SK-N-SH (cell line): ENCODE measurements at regions of chr17 and their contacts with region 1.

Region 1: GRCh38 chr17:48131216-48131824 is 23.8 kb downstream of the SNX11 start:
- DNase-seq: peak; percentile 82
- H3K4me3 ChIP-seq: no peak overlapping the region; a peak in 1 of 4 replicates
- H3K27ac ChIP-seq: no peak overlapping the region
- H3K4me1 ChIP-seq: peaks cover 7 to 17% of the 10 kb centered on the region in 2 experiments; a peak in 2 of 4 replicates
- H3K27me3 ChIP-seq: peaks cover 8% of the 10 kb centered on the region; the same call in 1 of the 2 replicates
- CTCF ChIP-seq: peak; percentile 99
- EP300 ChIP-seq: no peak
- RAD21 ChIP-seq: peak; percentile 99

Region 2: GRCh38 chr17:48002266-48002915 is 128.9 kb before region 1 on chr17:
- CTCF ChIA-PET with region 1: no interaction called
- POLR2A ChIA-PET with region 1: no interaction called
- DNase-seq: no peak
- H3K4me3 ChIP-seq: peak overlapping the region in 1 of 2 experiments; percentile 43; a peak in 2 of 4 replicates
- H3K27ac ChIP-seq: peak overlapping the region; percentile 99 to 100
- H3K4me1 ChIP-seq: peaks cover 61 to 65% of the 10 kb centered on the region in 2 experiments
- H3K27me3 ChIP-seq: no peaks in the 10 kb centered on the region
- CTCF ChIP-seq: no peak
- EP300 ChIP-seq: no peak
- RAD21 ChIP-seq: no peak

Region 3: GRCh38 chr17:48037036-48037837 is 94.1 kb before region 1 on chr17 and contains the start of gene COPZ2:
- CTCF ChIA-PET with region 1: interaction called, 232 read pairs
- POLR2A ChIA-PET with region 1: no interaction called
- DNase-seq: peak; percentile 85
- H3K4me3 ChIP-seq: peak within 1 kb of the TSS; percentile 53 to 63
- H3K27ac ChIP-seq: peak within 1 kb of the TSS in 1 of 2 experiments; percentile 1; a peak in 1 of 4 replicates
- H3K4me1 ChIP-seq: peaks cover 5 to 14% of the 10 kb centered on the region in 2 experiments; a peak in 2 of 4 replicates
- H3K27me3 ChIP-seq: no peaks in the 10 kb centered on the region
- CTCF ChIP-seq: peak; percentile 69
- EP300 ChIP-seq: no peak
- RAD21 ChIP-seq: peak; percentile 13; the same call in 1 of the 2 replicates
- polyA plus RNA-seq, gene COPZ2: 31.2 and 36.9 TPM in 2 replicates

Region 4: GRCh38 chr17:48074315-48075081 is 56.8 kb before region 1 on chr17:
- CTCF ChIA-PET with region 1: interaction called, 127 read pairs
- POLR2A ChIA-PET with region 1: no interaction called
- DNase-seq: peak; percentile 77
- H3K4me3 ChIP-seq: no peak overlapping the region
- H3K27ac ChIP-seq: peak overlapping the region in 1 of 2 experiments; percentile 33; a peak in 1 of 4 replicates
- H3K4me1 ChIP-seq: no peaks in the 10 kb centered on the region
- H3K27me3 ChIP-seq: no peaks in the 10 kb centered on the region
- CTCF ChIP-seq: peak; percentile 98
- EP300 ChIP-seq: no peak
- RAD21 ChIP-seq: peak; percentile 96

Region 5: DNA sequence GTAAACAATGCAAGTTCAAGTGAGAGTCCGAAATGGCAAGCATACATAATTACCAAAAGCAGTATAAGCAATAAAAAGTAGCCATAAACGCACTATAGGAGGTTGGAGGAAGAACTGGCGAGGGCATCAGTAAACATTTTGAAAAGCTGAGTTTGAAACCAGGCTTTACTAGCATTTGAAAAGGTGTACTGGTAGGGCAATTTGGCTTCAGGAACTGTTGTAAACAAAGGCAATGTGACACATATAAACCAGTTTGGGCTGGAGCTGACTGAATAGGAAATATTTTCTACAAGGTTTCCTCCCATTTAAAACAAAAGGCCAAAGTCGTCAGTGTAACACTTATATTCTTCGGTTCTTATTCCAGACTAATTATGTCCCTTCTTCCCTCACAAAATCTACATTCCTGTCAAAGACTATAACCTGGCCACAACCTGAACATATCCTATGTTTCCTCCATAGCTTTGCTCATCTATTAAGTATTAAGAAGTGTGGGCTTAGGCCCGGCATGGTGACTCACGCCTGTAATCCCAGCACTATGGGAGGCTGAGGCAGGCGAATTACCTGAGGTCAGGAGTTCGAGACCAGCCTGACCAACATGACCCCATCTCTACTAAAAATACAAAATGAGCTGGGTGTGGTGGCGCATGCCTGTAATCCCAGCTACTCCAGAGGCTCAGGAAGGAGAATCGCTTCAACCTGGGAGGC is 37.8 kb before region 1 on chr17:
- CTCF ChIA-PET with region 1: interaction called, 23 read pairs
- POLR2A ChIA-PET with region 1: no interaction called
- DNase-seq: no peak
- H3K4me3 ChIP-seq: no peak overlapping the region
- H3K27ac ChIP-seq: no peak overlapping the region
- H3K4me1 ChIP-seq: no peaks in the 10 kb centered on the region
- H3K27me3 ChIP-seq: no peaks in the 10 kb centered on the region
- CTCF ChIP-seq: no peak
- EP300 ChIP-seq: no peak
- RAD21 ChIP-seq: no peak

Region 6: DNA sequence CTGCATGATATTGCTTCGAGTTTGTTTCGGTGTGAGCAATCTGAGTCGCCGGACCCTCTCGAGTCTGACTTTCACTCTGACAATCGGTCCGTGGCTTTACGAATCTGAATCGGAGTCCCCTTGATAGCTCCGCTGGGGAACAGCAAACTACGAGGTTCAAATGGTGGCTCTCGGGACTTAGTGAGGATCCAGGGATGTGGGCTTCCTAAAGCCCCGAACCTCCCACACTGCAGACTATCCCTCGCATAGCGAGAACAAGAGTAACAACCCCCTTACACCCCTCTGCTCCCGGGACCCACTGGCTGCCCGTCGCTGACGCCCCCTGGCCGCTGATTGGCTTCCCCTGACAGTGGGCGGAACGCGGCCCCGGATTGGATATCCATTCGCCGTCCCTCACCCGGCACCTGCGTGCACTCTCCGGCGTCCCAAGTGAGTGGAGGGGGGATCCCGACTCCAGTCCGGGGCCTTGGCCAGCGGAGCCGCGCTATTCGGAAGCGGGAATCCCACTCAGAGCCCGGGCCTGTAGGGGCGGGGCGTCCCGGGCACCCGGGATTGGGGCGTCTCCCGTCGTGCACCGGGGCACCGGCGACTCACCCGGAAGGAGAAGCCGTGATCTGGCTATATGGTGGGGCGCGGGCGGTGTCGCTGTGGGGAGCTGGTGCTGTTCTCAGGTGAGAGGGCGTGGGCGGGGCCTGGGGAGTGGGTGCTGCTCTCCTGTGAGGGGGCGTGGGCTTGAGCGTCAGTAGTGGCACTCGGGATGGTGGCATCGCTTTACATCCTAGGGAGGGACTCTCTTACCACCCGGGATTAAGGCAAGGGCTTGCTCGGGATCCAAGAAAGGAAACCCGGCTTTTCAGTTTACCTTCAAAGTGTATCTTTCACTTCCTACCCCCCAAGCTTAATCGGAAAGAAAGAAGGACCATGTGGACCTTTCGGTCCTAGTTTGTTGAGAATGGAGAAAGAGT is 23.9 kb before region 1 on chr17 and contains the start of gene SNX11:
- CTCF ChIA-PET with region 1: interaction called, 19 read pairs
- POLR2A ChIA-PET with region 1: no interaction called
- DNase-seq: peak; percentile 98
- H3K4me3 ChIP-seq: peak within 1 kb of the TSS; percentile 70 to 89
- H3K27ac ChIP-seq: peak within 1 kb of the TSS; percentile 76 to 92
- H3K4me1 ChIP-seq: peaks cover 4 to 7% of the 10 kb centered on the region in 2 experiments; a peak in 3 of 4 replicates
- H3K27me3 ChIP-seq: no peaks in the 10 kb centered on the region
- CTCF ChIP-seq: peak; percentile 21; the same call in 1 of the 2 replicates
- EP300 ChIP-seq: no peak
- RAD21 ChIP-seq: no peak
- polyA plus RNA-seq, gene SNX11: 19.0 and 31.6 TPM in 2 replicates

Region 7: DNA sequence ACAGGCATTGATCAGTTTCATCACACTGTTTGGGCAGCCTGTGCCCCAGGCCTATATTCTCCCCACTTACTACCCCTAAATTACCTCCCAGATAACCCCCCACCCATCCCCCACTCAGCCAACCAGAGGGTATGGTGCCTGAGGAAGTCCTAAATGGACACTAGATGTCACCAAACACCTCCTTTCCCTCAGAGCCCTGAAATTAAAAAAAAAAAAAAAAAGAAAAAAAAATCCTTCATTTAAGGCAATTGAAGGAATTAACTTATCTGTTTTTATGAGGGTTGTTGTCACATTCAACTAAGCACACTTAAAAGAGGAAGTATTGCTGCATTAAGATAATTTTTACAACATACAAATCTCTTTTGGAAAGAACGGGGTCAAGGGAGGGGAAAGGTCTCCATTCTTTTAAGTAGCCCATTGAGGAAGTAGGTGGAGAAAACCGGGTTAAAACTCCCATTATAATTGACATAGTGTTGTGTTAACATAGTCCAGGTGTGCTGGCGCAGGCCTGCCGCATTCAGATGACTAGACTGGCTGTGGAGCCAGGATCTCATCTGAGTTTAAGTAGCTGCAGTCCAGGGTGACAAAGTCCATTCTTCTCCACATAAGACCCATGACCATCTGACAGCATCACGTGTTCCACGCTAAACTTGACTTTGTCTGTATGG is 22.5 kb after region 1 on chr17:
- CTCF ChIA-PET with region 1: interaction called, 38 read pairs
- POLR2A ChIA-PET with region 1: no interaction called
- DNase-seq: peak; percentile 62
- H3K4me3 ChIP-seq: no peak overlapping the region
- H3K27ac ChIP-seq: no peak overlapping the region
- H3K4me1 ChIP-seq: peaks cover 4 to 6% of the 10 kb centered on the region in 2 experiments; a peak in 3 of 4 replicates
- H3K27me3 ChIP-seq: peaks cover 84% of the 10 kb centered on the region
- CTCF ChIP-seq: peak; percentile 74
- EP300 ChIP-seq: no peak
- RAD21 ChIP-seq: peak; percentile 72

Region 8: DNA sequence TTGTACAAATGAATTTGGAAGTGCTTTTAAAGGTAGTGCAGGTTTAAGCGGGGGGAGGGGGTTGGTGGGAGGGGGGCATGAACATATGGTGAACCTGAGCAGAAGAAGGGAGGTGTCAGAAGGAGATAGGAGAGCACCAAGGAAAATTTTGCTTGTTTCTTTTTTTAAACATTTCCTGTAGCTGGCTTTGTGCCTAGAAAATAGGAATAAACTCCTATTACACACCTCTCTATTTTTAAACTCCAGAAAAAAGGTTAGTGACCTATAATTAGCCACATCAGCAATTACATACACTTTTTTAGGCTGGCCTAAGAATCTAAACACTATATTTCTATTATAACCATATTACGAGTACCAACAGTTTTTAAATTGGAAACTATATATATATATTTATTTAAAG is 139.6 kb after region 1 on chr17:
- CTCF ChIA-PET with region 1: no interaction called
- POLR2A ChIA-PET with region 1: no interaction called
- DNase-seq: no peak
- H3K4me3 ChIP-seq: no peak overlapping the region
- H3K27ac ChIP-seq: no peak overlapping the region
- H3K4me1 ChIP-seq: no peaks in the 10 kb centered on the region
- H3K27me3 ChIP-seq: peaks cover 63% of the 10 kb centered on the region
- CTCF ChIP-seq: no peak
- EP300 ChIP-seq: no peak
- RAD21 ChIP-seq: no peak

Region 9: DNA sequence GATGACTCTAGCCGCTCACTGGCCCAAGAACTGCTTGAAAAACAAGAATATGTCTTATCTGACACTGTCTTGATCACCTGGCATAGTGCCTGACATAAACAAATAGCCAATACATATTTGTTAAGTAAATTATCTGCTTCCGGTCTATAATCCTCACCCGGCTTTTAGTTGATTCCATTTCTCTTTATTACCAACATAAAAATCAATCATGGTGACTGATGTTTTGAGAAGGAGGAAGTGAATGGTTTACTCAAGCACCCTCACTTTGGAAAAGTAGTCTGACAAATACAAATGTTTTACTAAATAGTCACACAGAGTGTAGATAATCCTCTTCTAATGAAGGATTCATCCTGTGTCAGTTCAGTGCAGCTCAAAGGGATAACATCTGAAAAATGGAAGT is 251.7 kb after region 1 on chr17:
- CTCF ChIA-PET with region 1: no interaction called
- POLR2A ChIA-PET with region 1: no interaction called
- DNase-seq: no peak
- H3K4me3 ChIP-seq: no peak overlapping the region
- H3K27ac ChIP-seq: no peak overlapping the region
- H3K4me1 ChIP-seq: no peaks in the 10 kb centered on the region
- H3K27me3 ChIP-seq: peaks cover 67% of the 10 kb centered on the region
- CTCF ChIP-seq: no peak
- EP300 ChIP-seq: no peak
- RAD21 ChIP-seq: no peak

Region 10: GRCh38 chr17:48598736-48599135 is 467.4 kb after region 1 on chr17:
- CTCF ChIA-PET with region 1: no interaction called
- POLR2A ChIA-PET with region 1: no interaction called
- DNase-seq: no peak
- H3K4me3 ChIP-seq: no peak overlapping the region
- H3K27ac ChIP-seq: no peak overlapping the region
- H3K4me1 ChIP-seq: no peaks in the 10 kb centered on the region; a peak in 1 of 4 replicates
- H3K27me3 ChIP-seq: peaks cover 99% of the 10 kb centered on the region
- CTCF ChIP-seq: no peak
- EP300 ChIP-seq: no peak
- RAD21 ChIP-seq: no peak